Ovary (tissue), 10 donors: ENCODE measurements at regions of chrX and their contacts with region 1.

Region 1: GRCh38 chrX:131257367-131257766 is 31.7 kb downstream of the IGSF1 start:
- DNase-seq: no peak
- H3K4me3 ChIP-seq: no peak overlapping the region
- H3K27ac ChIP-seq: no peak overlapping the region
- H3K4me1 ChIP-seq: no peaks in the 10 kb centered on the region
- H3K27me3 ChIP-seq: no peaks in the 10 kb centered on the region
- CTCF ChIP-seq: no peak
- EP300 ChIP-seq: no peak
- POLR2A ChIP-seq: no peak

Region 2: DNA sequence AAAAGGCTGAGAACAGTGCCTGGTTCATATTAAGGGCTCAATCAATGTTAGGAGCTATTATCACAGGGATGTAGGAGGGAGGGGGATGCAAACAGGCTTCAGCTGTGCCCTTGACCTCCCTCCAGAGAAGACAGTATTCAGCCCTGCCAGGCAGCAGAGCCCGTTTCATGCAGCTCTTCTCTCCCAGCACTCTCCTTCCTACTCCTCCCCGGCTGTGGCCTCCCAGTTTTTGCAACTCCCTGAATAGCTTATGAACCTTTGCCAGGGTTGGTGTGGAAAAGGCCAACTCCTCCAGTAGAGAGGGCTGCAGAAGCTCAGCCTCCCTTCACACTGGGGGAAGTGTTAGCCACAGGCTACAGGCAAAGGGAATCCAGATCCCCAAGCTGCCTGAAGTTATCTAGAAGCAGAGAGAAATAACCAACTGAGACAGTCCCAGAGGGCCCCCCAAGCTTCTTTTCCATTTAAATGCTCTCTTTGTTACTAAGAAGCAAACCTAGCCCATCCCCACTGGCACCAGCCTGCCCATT is 1570.9 kb before region 1 on chrX:
- intact Hi-C with region 1: loop called in 1 of 4 experiments (anchors 5 kb)
- DNase-seq: peak; percentile 46 to 65 (median 61)
- H3K4me3 ChIP-seq: no peak overlapping the region
- H3K27ac ChIP-seq: no peak overlapping the region
- H3K4me1 ChIP-seq: peaks cover 1% of the 10 kb centered on the region
- H3K27me3 ChIP-seq: no peaks in the 10 kb centered on the region
- CTCF ChIP-seq: no peak
- EP300 ChIP-seq: no peak
- POLR2A ChIP-seq: no peak